ENCODE measurements at regions of chr9 and their contacts with region 1.

Region 1: GRCh38 chr9:114345493-114346065 is 15.9 kb downstream of the ORM2 start:
- DNase-seq: no peak
- ATAC-seq: no peak
- H3K4me3 ChIP-seq: no peak overlapping the region
- H3K4me3 Mint-ChIP-seq: no peak overlapping the region
- H3K27ac ChIP-seq: no peak overlapping the region
- H3K27ac Mint-ChIP-seq: peak overlapping the region; percentile 11 to 34
- H3K4me1 ChIP-seq: peaks cover 17 to 34% of the 10 kb centered on the region in 2 experiments
- H3K4me1 Mint-ChIP-seq: peaks cover 47 to 53% (median 49%) of the 10 kb centered on the region in 3 donors
- H3K27me3 ChIP-seq: no peaks in the 10 kb centered on the region
- H3K27me3 Mint-ChIP-seq: no peaks in the 10 kb centered on the region

Region 2: DNA sequence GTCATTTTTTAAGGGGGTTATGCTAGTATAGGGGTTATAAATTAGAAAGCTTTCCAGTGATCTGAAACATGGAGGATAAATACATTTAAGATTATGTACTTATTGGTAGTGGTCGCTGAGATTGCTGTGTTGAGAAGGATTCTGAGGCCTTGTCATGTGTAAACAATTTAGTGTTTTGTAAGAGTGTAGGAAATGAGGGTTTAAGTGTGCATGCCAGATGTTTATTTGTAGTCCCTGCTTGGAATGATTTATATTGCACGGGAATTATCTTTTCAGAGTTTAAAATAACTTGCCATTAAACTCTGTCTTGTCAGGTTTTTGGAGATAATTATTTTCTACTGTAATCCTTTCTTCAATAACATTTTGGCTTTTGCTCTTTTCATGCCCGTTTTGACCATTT is 450.1 kb before region 1 on chr9:
- CTCF ChIA-PET with region 1: no interaction called
- POLR2A ChIA-PET with region 1: no interaction called
- DNase-seq: no peak
- ATAC-seq: no peak
- H3K4me3 ChIP-seq: no peak overlapping the region
- H3K4me3 Mint-ChIP-seq: no peak overlapping the region
- H3K27ac ChIP-seq: no peak overlapping the region
- H3K27ac Mint-ChIP-seq: no peak overlapping the region
- H3K4me1 ChIP-seq: no peaks in the 10 kb centered on the region
- H3K4me1 Mint-ChIP-seq: no peaks in the 10 kb centered on the region
- H3K27me3 ChIP-seq: peaks cover 0 to 8% of the 10 kb centered on the region in 2 experiments
- H3K27me3 Mint-ChIP-seq: peaks cover 4 to 7% of the 10 kb centered on the region in 2 donors

Region 3: GRCh38 chr9:114413861-114414301 is 68.3 kb after region 1 on chr9:
- CTCF ChIA-PET with region 1: no interaction called
- POLR2A ChIA-PET with region 1: interaction called in 1 of 2 experiments, 12 read pairs
- DNase-seq: no peak
- ATAC-seq: no peak
- H3K4me3 ChIP-seq: no peak overlapping the region
- H3K4me3 Mint-ChIP-seq: no peak overlapping the region
- H3K27ac ChIP-seq: no peak overlapping the region
- H3K27ac Mint-ChIP-seq: no peak overlapping the region
- H3K4me1 ChIP-seq: peaks cover 0 to 13% of the 10 kb centered on the region in 2 experiments
- H3K4me1 Mint-ChIP-seq: peaks cover 10 to 17% (median 14%) of the 10 kb centered on the region in 3 donors
- H3K27me3 ChIP-seq: no peaks in the 10 kb centered on the region
- H3K27me3 Mint-ChIP-seq: no peaks in the 10 kb centered on the region

Region 4: GRCh38 chr9:114424126-114424525 is 78.5 kb after region 1 on chr9:
- CTCF ChIA-PET with region 1: no interaction called
- POLR2A ChIA-PET with region 1: no interaction called
- DNase-seq: no peak
- ATAC-seq: no peak
- H3K4me3 ChIP-seq: no peak overlapping the region
- H3K4me3 Mint-ChIP-seq: no peak overlapping the region
- H3K27ac ChIP-seq: no peak overlapping the region
- H3K27ac Mint-ChIP-seq: no peak overlapping the region
- H3K4me1 ChIP-seq: no peaks in the 10 kb centered on the region
- H3K4me1 Mint-ChIP-seq: no peaks in the 10 kb centered on the region
- H3K27me3 ChIP-seq: peaks cover 0 to 8% of the 10 kb centered on the region in 2 experiments
- H3K27me3 Mint-ChIP-seq: no peaks in the 10 kb centered on the region

Region 5: DNA sequence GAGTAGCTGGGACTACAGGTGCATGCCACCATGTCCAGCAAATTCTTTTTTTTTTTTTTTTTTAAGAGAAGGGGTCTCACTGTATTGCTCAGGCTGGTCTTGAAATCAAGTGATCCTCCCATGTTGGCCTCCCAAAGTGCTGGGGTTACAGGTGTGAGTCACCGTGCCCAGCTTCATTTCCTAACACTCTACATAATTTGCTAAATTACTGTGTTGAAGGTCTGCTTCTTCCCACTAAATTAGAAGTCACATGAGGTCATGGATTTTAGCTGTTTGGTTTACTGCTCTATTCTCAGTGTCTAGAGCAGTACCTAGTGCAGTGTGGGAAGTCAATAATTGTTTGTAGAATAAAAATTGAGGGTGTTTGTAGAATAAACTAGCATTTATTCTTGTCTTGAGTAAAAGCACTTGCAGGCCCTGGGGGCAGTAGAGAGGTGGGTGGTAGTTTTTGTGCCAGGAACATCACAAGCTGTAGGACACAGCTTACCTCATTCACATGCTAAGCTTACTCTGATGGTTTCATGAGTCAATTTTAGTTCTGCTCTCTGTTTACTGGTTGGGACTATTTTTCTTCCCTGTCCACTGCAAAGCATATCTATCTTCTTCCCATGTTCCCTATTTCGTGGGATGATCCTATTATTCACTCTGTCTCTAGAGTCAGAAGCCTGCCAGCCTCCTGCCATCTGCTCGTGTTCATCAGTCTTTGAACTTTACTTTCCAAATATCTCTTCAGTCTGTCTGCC is 329.4 kb after region 1 on chr9:
- CTCF ChIA-PET with region 1: no interaction called
- POLR2A ChIA-PET with region 1: interaction called in 1 of 2 experiments, 10 read pairs
- DNase-seq: no peak
- ATAC-seq: no peak
- H3K4me3 ChIP-seq: no peak overlapping the region
- H3K4me3 Mint-ChIP-seq: no peak overlapping the region
- H3K27ac ChIP-seq: no peak overlapping the region
- H3K27ac Mint-ChIP-seq: no peak overlapping the region
- H3K4me1 ChIP-seq: no peaks in the 10 kb centered on the region
- H3K4me1 Mint-ChIP-seq: no peaks in the 10 kb centered on the region
- H3K27me3 ChIP-seq: no peaks in the 10 kb centered on the region
- H3K27me3 Mint-ChIP-seq: peaks cover 9 to 24% of the 10 kb centered on the region in 2 donors

Region 6: DNA sequence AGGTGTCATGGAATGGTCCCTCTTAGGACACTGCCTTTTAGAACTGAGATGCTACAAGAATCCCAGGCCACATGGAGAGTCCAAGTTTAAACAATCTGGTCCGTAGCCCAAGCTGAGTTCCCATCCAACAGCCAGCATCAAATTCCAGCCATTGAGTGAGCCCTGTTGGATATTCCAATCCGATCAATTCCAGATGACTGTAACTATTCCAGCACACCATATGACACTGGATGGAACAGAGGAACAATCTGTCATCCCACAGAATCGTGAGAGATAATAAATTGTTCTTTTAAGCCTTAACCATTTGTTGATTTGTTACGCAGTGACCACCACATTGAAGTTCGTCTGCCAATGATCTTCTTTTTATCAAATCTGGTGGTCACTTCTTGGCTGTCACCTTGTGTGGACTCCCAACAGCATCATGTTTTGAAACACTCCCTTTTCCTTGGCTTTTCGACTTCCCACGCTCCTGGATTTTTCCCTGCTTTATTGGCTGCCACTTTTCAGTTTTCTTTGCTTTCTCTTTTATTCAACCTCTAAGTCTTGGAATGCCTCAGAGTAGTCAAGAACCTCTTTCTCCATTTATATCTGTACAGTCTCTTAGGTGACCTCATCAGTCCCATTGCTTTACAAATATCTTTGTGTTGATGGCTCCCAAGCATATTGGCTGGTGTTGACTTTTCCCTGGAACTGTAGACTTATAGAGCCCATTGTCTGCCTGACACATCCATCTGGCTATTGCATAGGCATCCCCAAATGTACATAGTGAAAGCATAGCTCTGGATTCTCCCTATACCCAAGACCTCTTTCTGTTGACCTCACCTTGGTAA is 414.1 kb after region 1 on chr9:
- CTCF ChIA-PET with region 1: no interaction called
- POLR2A ChIA-PET with region 1: no interaction called
- DNase-seq: no peak
- ATAC-seq: no peak
- H3K4me3 ChIP-seq: no peak overlapping the region
- H3K4me3 Mint-ChIP-seq: no peak overlapping the region
- H3K27ac ChIP-seq: no peak overlapping the region
- H3K27ac Mint-ChIP-seq: no peak overlapping the region
- H3K4me1 ChIP-seq: peaks cover 0 to under 1% of the 10 kb centered on the region in 2 experiments
- H3K4me1 Mint-ChIP-seq: peaks cover 10 to 13% (median 11%) of the 10 kb centered on the region in 3 donors
- H3K27me3 ChIP-seq: no peaks in the 10 kb centered on the region
- H3K27me3 Mint-ChIP-seq: no peaks in the 10 kb centered on the region

Measured in T-cell (primary cell).